Cardiac septum (tissue), 1 donor: ENCODE measurements at regions of chr11 and their contacts with region 1.

Region 1: GRCh38 chr11:119018074-119018938 is at the starts of genes RPS25 and TRAPPC4:
- DNase-seq: peak; percentile 98
- total RNA-seq, gene RPS25: 572 TPM
- total RNA-seq, gene TRAPPC4: 42.4 TPM

Region 2: GRCh38 chr11:118997627-118998387 is 20.5 kb before region 1 on chr11 and contains the start of gene CENATAC:
- intact Hi-C with region 1: loop called (anchors 1 kb)
- DNase-seq: peak; percentile 99
- total RNA-seq, gene CENATAC: 15.0 TPM

Region 3: GRCh38 chr11:119030329-119031049 is 12.2 kb after region 1 on chr11 and contains the start of gene SLC37A4:
- intact Hi-C with region 1: loop called (anchors 1 kb)
- DNase-seq: peak; percentile 99
- total RNA-seq, gene SLC37A4: 3.9 TPM